ENCODE measurements at regions of chr4 and their contacts with region 1.

Region 1: DNA sequence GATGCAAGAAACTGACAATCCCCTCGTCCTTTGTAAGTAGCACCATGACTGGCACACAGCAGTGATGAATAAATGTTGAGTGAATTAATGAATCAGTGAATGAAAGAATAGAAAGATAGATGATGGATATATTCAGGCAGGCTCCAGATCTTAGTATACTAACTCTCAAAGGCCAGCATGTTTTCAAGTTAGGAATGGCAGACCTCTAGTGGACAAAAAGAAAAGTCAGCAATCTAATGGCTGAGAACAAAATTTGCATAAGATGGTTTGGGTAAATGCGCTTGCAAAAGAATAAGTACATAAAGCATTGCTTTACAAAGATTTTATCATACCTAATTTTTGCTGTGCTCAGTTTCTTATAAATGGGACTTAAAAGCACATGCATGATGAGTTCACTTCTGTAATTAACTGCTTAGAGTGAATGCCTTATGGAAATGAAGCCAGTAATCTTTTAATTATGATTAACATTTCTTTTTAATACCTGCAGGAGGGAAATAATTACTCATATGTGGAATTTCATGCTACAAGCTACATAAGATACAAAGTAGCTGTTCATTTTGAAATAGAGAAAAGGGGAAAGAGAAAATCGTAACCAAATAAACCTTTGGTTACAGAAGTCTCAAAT is 126.9 kb upstream of the GPRIN3 start:
- DNase-seq: peak; percentile 34 to 68 (median 63)
- H3K4me3 ChIP-seq: no peak overlapping the region
- H3K27ac ChIP-seq: no peak overlapping the region
- H3K4me1 ChIP-seq: peaks cover 0 to 12% (median 6%) of the 10 kb centered on the region in 4 experiments
- H3K27me3 ChIP-seq: no peaks in the 10 kb centered on the region

Region 2: GRCh38 chr4:89248879-89249281 is 185.6 kb before region 1 on chr4:
- CTCF ChIA-PET with region 1: interaction called, 16 read pairs
- POLR2A ChIA-PET with region 1: no interaction called
- DNase-seq: no peak
- H3K4me3 ChIP-seq: no peak overlapping the region
- H3K27ac ChIP-seq: no peak overlapping the region
- H3K4me1 ChIP-seq: peaks cover 0 to 4% (median 2%) of the 10 kb centered on the region in 4 experiments
- H3K27me3 ChIP-seq: no peaks in the 10 kb centered on the region

Region 3: DNA sequence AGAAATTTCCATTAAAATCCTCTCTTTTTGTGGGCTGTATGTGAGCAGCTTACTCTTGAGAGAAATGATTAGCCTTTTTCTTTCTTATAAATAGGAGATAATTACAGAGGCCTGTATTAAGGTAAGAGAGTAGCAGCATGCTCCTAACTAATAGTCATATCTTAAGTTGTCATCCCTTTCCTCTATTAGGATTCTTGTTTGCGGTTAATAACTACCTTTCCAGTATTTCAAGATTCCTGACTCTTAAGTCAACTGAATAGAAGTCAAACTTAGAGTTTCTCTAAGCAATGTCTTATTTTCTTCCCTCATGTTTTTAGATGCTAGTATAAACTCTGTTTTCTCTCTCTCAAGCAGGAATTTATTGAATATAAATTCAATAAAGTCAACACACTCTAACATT is 13.1 kb after region 1 on chr4:
- CTCF ChIA-PET with region 1: no interaction called
- POLR2A ChIA-PET with region 1: no interaction called
- DNase-seq: no peak
- H3K4me3 ChIP-seq: no peak overlapping the region
- H3K27ac ChIP-seq: no peak overlapping the region
- H3K4me1 ChIP-seq: no peaks in the 10 kb centered on the region
- H3K27me3 ChIP-seq: no peaks in the 10 kb centered on the region